Gastrocnemius medialis (tissue), 4 donors: ENCODE measurements at regions of chr15 and their contacts with region 1.

Region 1: DNA sequence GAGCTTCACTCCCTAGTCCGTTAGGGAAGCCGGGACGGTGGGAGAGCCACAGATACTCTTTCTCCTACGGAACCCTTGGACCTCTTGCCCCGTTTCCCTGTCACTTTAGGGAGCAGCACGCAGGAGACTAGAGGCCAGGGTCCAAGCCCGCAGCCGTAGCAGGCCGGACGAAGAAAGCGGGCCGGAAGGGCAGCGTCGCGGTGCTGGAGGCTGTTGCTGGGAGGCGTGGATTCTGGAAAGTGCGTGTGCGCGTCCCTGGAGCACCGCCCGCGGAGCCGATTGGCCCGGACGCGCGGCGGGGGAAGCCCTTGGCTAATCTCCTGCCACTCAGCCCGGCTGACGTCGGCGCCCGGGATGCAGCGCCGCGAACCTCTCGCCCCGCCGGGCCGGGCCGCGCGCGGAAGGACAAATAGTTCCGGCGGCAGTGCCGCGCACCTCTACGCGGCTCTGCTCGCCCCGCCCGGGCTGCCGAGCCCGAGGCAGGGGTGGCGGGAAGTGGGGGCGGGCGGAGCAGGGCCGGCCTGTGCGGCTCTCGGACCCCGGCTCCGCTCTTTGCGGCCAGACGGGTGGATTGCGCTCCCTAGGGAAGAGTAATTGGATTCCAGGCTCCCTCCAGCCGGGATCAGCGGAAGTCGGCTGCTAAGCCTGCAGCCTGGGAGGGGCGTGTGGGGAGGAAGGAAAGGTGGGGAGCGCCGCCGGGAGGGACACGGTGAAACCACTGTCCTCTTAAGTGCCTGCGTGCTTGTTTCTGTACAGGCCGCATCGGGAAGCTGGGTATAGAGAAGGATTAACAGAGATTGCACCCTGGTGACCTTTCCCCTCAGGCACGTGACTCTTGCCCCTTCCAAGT is 31.3 kb upstream of the TCF12 start:
- DNase-seq: peak; percentile 89 to 92
- ATAC-seq: peak; percentile 95
- H3K4me3 ChIP-seq: peak overlapping the region; percentile 73 to 80 (median 76)
- H3K27ac ChIP-seq: peak overlapping the region; percentile 93 to 98 (median 94)
- H3K4me1 ChIP-seq: peaks cover 13% of the 10 kb centered on the region in 2 donors
- H3K27me3 ChIP-seq: no peaks in the 10 kb centered on the region
- CTCF ChIP-seq: peak in 1 of 5 experiments; percentile 21
- POLR2A ChIP-seq: peak; percentile 74 to 76

Region 2: GRCh38 chr15:56732921-56733797 is 154.0 kb before region 1 on chr15 and contains the start of gene ZNF280D:
- in situ Hi-C with region 1: no loop called
- intact Hi-C with region 1: loop called (anchors 1 kb)
- DNase-seq: peak; percentile 82 to 90
- ATAC-seq: peak; percentile 82 to 88
- H3K4me3 ChIP-seq: peak within 1 kb of the TSS; percentile 65 to 76 (median 67)
- H3K27ac ChIP-seq: peak within 1 kb of the TSS; percentile 86 to 97 (median 92)
- H3K4me1 ChIP-seq: peaks cover 37 to 47% of the 10 kb centered on the region in 2 donors
- H3K27me3 ChIP-seq: no peaks in the 10 kb centered on the region
- CTCF ChIP-seq: peak in 1 of 5 experiments; percentile 8
- POLR2A ChIP-seq: peak; percentile 55 to 65
- total RNA-seq, gene ZNF280D: 19.9 to 45.5 (median 23.4) TPM

Region 3: DNA sequence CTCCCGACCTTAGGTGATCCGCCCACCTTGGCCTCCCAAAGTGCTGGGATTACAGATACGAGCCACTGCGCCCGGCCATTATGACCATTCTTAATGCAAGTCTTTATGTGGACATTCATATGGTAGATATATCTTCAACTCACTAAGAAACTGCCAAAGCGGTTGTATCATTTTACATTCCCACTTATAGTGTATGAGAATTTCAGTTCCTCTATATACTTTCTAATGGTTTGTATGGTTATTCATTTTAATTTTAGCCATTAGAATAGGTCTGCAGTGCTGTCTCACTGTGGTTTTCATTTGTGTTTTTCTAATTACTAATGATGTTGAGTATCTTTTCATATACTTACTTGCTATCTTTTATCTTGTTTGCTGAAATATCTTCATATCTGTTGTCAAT is 63.8 kb after region 1 on chr15:
- in situ Hi-C with region 1: no loop called
- intact Hi-C with region 1: no loop called
- DNase-seq: no peak
- ATAC-seq: no peak
- H3K4me3 ChIP-seq: no peak overlapping the region
- H3K27ac ChIP-seq: no peak overlapping the region
- H3K4me1 ChIP-seq: peaks cover 14 to 18% of the 10 kb centered on the region in 2 donors
- H3K27me3 ChIP-seq: no peaks in the 10 kb centered on the region
- CTCF ChIP-seq: no peak
- POLR2A ChIP-seq: no peak